ENCODE measurements at regions of chr18 and their contacts with region 1.

Region 1: DNA sequence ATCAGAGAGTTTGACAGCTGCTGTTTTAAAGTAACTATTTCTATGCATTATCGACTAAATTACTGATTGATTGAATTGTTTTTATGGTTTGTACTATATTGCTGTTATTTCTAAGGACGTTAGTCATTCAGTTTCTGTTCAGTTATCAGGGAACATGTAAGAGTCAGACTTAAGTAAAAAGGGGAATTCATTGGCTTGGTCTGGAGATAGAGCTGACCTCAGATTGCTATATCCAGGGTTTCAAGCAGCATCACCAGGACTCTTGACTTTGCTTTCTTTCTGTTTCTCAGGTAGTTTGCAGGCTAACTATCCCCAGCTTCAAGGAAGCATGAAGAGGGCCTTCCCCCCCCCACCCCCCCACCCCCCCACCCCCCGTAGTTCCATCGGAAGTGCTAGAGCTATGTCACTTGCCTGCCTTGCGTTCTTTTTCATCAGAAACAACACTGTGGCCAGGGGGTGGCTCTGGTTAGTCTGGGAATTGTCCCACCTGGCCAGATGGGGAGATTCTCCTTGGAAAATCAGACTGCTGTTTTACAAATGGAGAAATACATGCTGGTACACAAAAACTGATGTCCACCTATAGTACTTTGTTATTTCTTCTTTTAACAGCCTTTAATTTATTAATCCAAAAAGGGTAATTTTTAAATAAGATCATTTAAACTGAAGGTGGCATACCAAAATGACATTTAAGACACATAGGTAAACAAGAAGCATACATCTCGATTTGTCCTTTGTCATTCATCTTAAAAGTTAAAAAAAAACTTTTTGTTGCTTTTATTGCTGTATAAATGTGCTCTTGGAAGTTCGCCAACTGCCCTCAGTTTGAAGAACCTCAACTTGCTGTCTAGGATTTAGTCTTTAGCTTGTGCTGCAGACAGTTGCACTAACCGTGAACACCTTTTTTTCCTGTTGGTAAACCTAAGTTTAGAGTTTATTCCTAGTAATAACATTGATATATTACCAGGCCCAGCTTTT is 9.4 kb downstream of the SMAD4 start:
- DNase-seq: no peak
- H3K4me3 ChIP-seq: no peak overlapping the region
- H3K27ac ChIP-seq: peak overlapping the region in 1 of 5 donors; percentile 8
- H3K4me1 ChIP-seq: peaks cover 26 to 82% of the 10 kb centered on the region in 2 donors
- H3K27me3 ChIP-seq: no peaks in the 10 kb centered on the region
- CTCF ChIP-seq: no peak
- POLR2A ChIP-seq: no peak

Region 2: GRCh38 chr18:50973367-50974126 is 65.9 kb before region 1 on chr18:
- intact Hi-C with region 1: loop called in 1 of 2 experiments (anchors 10 kb)
- DNase-seq: peak in 5 of 7 donors; percentile 26 to 58 (median 47)
- H3K4me3 ChIP-seq: no peak overlapping the region
- H3K27ac ChIP-seq: peak overlapping the region in 1 of 5 donors; percentile 0
- H3K4me1 ChIP-seq: peaks cover 7 to 27% of the 10 kb centered on the region in 2 donors
- H3K27me3 ChIP-seq: no peaks in the 10 kb centered on the region
- CTCF ChIP-seq: no peak
- POLR2A ChIP-seq: no peak

Region 3: GRCh38 chr18:51110073-51110803 is 70.8 kb after region 1 on chr18:
- intact Hi-C with region 1: no loop called
- DNase-seq: peak; percentile 53 to 81 (median 72)
- H3K4me3 ChIP-seq: no peak overlapping the region
- H3K27ac ChIP-seq: no peak overlapping the region
- H3K4me1 ChIP-seq: peaks cover 0 to 3% of the 10 kb centered on the region in 2 donors
- H3K27me3 ChIP-seq: no peaks in the 10 kb centered on the region
- CTCF ChIP-seq: peak; percentile 88 to 98 (median 94)
- POLR2A ChIP-seq: no peak

Region 4: GRCh38 chr18:51150132-51150715 is 110.8 kb after region 1 on chr18:
- intact Hi-C with region 1: no loop called
- DNase-seq: peak in 4 of 7 donors; percentile 23 to 50 (median 38)
- H3K4me3 ChIP-seq: no peak overlapping the region
- H3K27ac ChIP-seq: no peak overlapping the region
- H3K4me1 ChIP-seq: no peaks in the 10 kb centered on the region
- H3K27me3 ChIP-seq: no peaks in the 10 kb centered on the region
- CTCF ChIP-seq: no peak
- POLR2A ChIP-seq: no peak

Measured in adrenal gland (tissue), 19 donors.